IMR-90 (cell line): ENCODE measurements at regions of chr7 and their contacts with region 1.

Region 1: DNA sequence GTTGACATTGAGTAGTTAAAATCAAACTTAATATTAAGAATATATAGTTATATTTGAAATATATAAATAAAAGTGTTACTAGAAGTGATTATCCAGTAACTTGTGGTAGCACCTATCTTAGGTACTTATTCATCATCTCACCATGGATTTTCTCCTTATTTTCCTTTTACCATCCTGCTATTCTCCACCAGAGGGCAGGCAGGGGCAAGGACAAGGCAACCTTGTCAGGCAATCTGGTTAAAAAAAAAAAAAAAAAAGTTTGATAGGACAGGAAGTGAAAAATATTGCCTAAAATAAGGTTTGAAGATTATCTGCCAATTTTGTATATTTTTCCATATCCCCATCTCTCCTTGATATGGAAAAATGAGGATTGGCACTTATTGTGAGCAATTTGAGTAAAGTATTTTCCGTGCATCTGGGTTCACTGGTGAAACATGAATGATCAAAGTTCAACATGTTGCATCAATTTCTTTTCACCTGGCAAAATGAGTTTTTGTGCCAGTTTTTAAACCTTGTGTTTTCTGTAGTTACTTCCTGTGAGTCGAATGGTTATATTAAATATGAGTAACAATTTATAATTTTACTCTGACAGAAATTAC is 256.7 kb downstream of the AGMO start:
- DNase-seq: peak; percentile 39
- ATAC-seq: no peak
- H3K4me3 ChIP-seq: no peak overlapping the region
- H3K27ac ChIP-seq: no peak overlapping the region
- H3K4me1 ChIP-seq: no peaks in the 10 kb centered on the region
- H3K27me3 ChIP-seq: no peaks in the 10 kb centered on the region
- CTCF ChIP-seq: peak; percentile 75
- POLR2A ChIP-seq: no peak
- RAD21 ChIP-seq: peak; percentile 74

Region 2: DNA sequence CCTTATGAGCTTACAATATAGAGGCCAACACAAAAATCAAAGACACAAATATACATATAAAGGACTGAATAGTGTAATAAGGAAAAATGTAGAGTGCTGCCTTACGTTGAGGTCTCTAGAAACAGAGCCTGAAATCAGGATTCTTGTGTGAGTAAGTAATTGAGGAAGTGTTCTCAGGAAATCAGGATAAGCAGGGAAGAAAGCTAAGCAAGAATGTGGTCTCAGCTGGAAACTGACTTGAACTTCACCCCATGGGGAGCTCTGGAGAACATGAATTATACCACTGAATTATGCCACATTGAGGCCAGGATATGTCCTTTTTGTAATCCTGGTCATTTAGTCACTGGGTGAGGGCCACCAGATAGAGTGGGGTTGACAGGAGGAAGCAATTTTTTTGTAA is 1507.6 kb before region 1 on chr7:
- CTCF ChIA-PET with region 1: no interaction called
- POLR2A ChIA-PET with region 1: no interaction called
- dilution Hi-C with region 1: no loop called
- in situ Hi-C with region 1: no loop called
- intact Hi-C with region 1: no loop called
- DNase-seq: no peak
- ATAC-seq: no peak
- H3K4me3 ChIP-seq: no peak overlapping the region
- H3K27ac ChIP-seq: no peak overlapping the region
- H3K4me1 ChIP-seq: no peaks in the 10 kb centered on the region
- H3K27me3 ChIP-seq: no peaks in the 10 kb centered on the region
- CTCF ChIP-seq: no peak
- POLR2A ChIP-seq: no peak
- RAD21 ChIP-seq: no peak

Region 3: GRCh38 chr7:15555381-15555859 is 250.3 kb after region 1 on chr7:
- CTCF ChIA-PET with region 1: no interaction called
- POLR2A ChIA-PET with region 1: no interaction called
- dilution Hi-C with region 1: no loop called
- in situ Hi-C with region 1: no loop called
- intact Hi-C with region 1: loop called (anchors 5 kb)
- DNase-seq: peak; percentile 23
- ATAC-seq: peak; percentile 21; the same call in 1 of the 2 replicates
- H3K4me3 ChIP-seq: no peak overlapping the region
- H3K27ac ChIP-seq: no peak overlapping the region
- H3K4me1 ChIP-seq: peaks cover 2% of the 10 kb centered on the region; the same call in 1 of the 2 replicates
- H3K27me3 ChIP-seq: no peaks in the 10 kb centered on the region
- CTCF ChIP-seq: peak; percentile 36; the same call in 1 of the 2 replicates
- POLR2A ChIP-seq: no peak
- RAD21 ChIP-seq: peak; percentile 44

Region 4: DNA sequence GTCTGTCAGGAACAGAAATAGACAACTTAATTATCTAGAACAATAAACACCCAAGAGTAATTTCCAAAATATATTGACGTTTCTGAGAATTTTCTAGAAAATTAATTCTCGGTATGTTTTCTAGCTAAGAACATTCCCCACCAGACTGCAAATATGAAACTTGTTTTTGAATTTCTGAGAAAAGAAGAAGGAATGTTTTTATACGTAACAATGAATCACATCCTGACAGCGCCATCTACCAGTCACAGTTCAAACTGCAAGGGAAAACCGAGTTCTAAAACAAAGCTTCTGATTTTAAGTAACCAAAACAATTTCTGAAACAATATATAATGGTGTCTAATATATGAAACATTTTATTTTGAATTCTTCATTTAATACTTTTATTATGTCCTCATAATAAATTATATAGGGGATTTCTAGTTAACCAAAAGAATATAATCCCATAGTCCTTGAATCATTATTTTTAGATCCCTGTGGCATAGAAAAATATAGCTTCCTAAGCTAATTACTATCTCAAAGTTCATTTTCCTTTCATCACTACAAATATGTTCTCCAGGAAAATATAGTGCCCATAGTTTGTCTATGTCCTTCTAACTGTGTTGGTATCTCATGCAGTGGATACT is 415.9 kb after region 1 on chr7:
- CTCF ChIA-PET with region 1: interaction called, 6 read pairs
- POLR2A ChIA-PET with region 1: no interaction called
- dilution Hi-C with region 1: no loop called
- in situ Hi-C with region 1: no loop called
- intact Hi-C with region 1: loop called (anchors 1 kb)
- DNase-seq: peak; percentile 53
- ATAC-seq: no peak
- H3K4me3 ChIP-seq: no peak overlapping the region
- H3K27ac ChIP-seq: no peak overlapping the region
- H3K4me1 ChIP-seq: no peaks in the 10 kb centered on the region
- H3K27me3 ChIP-seq: no peaks in the 10 kb centered on the region
- CTCF ChIP-seq: peak; percentile 70
- POLR2A ChIP-seq: no peak
- RAD21 ChIP-seq: peak; percentile 63

Region 5: GRCh38 chr7:16062269-16062668 is 757.2 kb after region 1 on chr7:
- CTCF ChIA-PET with region 1: no interaction called
- POLR2A ChIA-PET with region 1: no interaction called
- dilution Hi-C with region 1: no loop called
- in situ Hi-C with region 1: loop called (anchors 5 kb)
- intact Hi-C with region 1: no loop called
- DNase-seq: peak; percentile 75
- ATAC-seq: peak; percentile 70
- H3K4me3 ChIP-seq: no peak overlapping the region
- H3K27ac ChIP-seq: no peak overlapping the region
- H3K4me1 ChIP-seq: peaks cover 10% of the 10 kb centered on the region
- H3K27me3 ChIP-seq: no peaks in the 10 kb centered on the region
- CTCF ChIP-seq: no peak
- POLR2A ChIP-seq: no peak
- RAD21 ChIP-seq: no peak